Calu3 (cell line): ENCODE measurements at regions of chr3 and their contacts with region 1.

Region 1: DNA sequence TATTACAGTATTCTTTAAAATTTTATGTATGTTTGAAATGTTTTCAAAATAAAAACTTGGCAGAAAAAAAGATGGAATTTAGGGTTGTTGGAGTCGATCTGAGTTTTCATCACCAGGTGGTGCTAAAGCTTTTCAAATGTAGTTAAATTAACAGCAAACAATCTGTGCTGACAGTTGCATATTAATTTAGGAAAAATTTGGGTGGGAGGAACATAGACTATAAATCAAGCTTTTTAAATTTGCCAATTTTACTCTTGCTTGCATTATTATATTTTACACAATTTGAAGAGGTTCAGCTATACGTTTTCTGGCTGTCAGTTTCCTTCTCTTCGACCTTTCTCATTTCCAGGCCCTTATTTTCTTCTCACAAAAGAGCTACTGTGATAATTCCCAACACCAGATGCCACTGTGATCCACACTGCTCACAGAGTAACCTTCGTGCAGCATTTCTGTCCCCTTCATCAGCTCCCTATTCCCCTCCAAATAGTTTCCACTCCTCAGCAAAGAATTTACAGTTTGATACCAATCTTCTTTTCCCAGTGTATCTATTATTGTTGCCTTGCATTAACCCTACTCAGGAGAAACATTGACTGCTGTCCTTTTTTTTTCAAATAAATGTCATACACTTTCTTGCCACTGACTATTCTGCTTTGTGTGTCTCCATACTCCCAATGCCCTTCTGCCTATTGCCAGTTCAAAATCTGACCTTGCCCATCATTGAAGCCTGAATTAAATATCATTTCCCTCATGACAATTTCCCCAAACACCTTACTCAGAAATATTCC is 53.4 kb upstream of the EIF5A2 start:
- DNase-seq: peak; percentile 50
- H3K4me3 Mint-ChIP-seq: no peak overlapping the region
- H3K27ac Mint-ChIP-seq: peak overlapping the region; percentile 8
- H3K4me1 Mint-ChIP-seq: peaks cover 27% of the 10 kb centered on the region
- H3K27me3 Mint-ChIP-seq: no peaks in the 10 kb centered on the region
- CTCF ChIP-seq: peak; percentile 84

Region 2: DNA sequence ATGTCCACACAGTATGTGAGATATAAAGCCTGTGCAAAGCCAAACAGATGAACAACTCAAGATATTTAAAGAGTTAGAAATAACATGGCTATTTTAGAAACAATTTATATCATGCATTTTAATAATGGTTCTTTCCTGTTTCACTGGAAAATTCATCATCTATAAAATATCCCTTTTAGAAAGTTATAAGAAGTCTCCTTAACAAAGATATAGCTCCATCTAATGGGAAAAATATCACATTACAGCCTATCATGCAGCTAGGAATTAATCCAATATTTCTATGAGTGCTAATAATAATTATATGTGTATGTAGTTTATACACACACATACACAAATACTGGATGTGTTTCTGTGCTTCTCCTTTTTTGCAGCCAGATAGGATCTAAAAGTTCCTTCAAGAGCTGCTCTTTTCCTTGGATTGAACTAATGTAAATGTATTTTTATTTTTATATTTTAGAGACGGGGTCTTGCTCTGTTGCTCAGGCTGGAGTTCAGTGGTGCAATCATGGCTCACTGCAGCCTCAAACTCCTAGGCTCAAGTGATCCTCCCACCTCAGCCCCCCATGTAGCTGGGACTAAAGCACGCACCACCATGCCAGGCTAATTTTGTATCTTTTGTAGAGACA is 113.4 kb before region 1 on chr3:
- CTCF ChIA-PET with region 1: no interaction called
- intact Hi-C with region 1: no loop called
- DNase-seq: no peak
- H3K4me3 Mint-ChIP-seq: no peak overlapping the region
- H3K27ac Mint-ChIP-seq: no peak overlapping the region
- H3K4me1 Mint-ChIP-seq: no peaks in the 10 kb centered on the region
- H3K27me3 Mint-ChIP-seq: no peaks in the 10 kb centered on the region
- CTCF ChIP-seq: peak; percentile 53

Region 3: GRCh38 chr3:171001957-171002694 is 40.3 kb after region 1 on chr3:
- CTCF ChIA-PET with region 1: interaction called, 3 read pairs
- intact Hi-C with region 1: loop called (anchors 5 kb)
- DNase-seq: peak; percentile 81
- H3K4me3 Mint-ChIP-seq: peak overlapping the region; percentile 26
- H3K27ac Mint-ChIP-seq: peak overlapping the region; percentile 85
- H3K4me1 Mint-ChIP-seq: peaks cover 86% of the 10 kb centered on the region
- H3K27me3 Mint-ChIP-seq: no peaks in the 10 kb centered on the region
- CTCF ChIP-seq: no peak

Region 4: GRCh38 chr3:171168086-171168485 is 206.3 kb after region 1 on chr3:
- CTCF ChIA-PET with region 1: interaction called, 23 read pairs
- intact Hi-C with region 1: loop called (anchors 1 kb)
- DNase-seq: peak; percentile 76
- H3K4me3 Mint-ChIP-seq: no peak overlapping the region
- H3K27ac Mint-ChIP-seq: peak overlapping the region; percentile 34
- H3K4me1 Mint-ChIP-seq: peaks cover 59% of the 10 kb centered on the region
- H3K27me3 Mint-ChIP-seq: no peaks in the 10 kb centered on the region
- CTCF ChIP-seq: peak; percentile 79

Region 5: GRCh38 chr3:171284308-171285075 is 322.7 kb after region 1 on chr3:
- CTCF ChIA-PET with region 1: no interaction called
- intact Hi-C with region 1: no loop called
- DNase-seq: peak; percentile 37
- H3K4me3 Mint-ChIP-seq: no peak overlapping the region
- H3K27ac Mint-ChIP-seq: peak overlapping the region; percentile 26
- H3K4me1 Mint-ChIP-seq: peaks cover 19% of the 10 kb centered on the region
- H3K27me3 Mint-ChIP-seq: no peaks in the 10 kb centered on the region
- CTCF ChIP-seq: no peak

Region 6: GRCh38 chr3:171365489-171365888 is 403.7 kb after region 1 on chr3:
- CTCF ChIA-PET with region 1: no interaction called
- intact Hi-C with region 1: no loop called
- DNase-seq: no peak
- H3K4me3 Mint-ChIP-seq: no peak overlapping the region
- H3K27ac Mint-ChIP-seq: no peak overlapping the region
- H3K4me1 Mint-ChIP-seq: peaks cover 18% of the 10 kb centered on the region
- H3K27me3 Mint-ChIP-seq: no peaks in the 10 kb centered on the region
- CTCF ChIP-seq: no peak

Region 7: DNA sequence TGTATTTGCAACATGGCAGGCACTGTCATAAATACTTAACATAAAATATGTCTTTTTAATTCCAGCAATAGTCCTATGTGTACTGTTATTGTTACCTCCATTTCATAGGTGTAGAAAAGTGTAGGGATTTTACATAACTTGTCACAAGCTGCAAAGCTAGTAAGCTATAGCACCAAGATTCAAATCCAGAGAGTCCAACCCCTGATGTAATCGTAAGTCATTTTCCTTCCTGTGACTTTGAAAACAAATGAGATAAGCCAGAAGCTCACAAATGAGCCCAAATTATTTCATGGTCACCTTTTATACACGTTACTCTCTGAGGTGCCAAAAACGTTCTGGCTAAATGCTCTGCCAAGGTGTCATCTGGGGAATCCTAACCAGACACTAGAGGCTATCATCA is 474.6 kb after region 1 on chr3:
- CTCF ChIA-PET with region 1: no interaction called
- intact Hi-C with region 1: no loop called
- DNase-seq: no peak
- H3K4me3 Mint-ChIP-seq: no peak overlapping the region
- H3K27ac Mint-ChIP-seq: no peak overlapping the region
- H3K4me1 Mint-ChIP-seq: no peaks in the 10 kb centered on the region
- H3K27me3 Mint-ChIP-seq: no peaks in the 10 kb centered on the region
- CTCF ChIP-seq: no peak

Region 8: DNA sequence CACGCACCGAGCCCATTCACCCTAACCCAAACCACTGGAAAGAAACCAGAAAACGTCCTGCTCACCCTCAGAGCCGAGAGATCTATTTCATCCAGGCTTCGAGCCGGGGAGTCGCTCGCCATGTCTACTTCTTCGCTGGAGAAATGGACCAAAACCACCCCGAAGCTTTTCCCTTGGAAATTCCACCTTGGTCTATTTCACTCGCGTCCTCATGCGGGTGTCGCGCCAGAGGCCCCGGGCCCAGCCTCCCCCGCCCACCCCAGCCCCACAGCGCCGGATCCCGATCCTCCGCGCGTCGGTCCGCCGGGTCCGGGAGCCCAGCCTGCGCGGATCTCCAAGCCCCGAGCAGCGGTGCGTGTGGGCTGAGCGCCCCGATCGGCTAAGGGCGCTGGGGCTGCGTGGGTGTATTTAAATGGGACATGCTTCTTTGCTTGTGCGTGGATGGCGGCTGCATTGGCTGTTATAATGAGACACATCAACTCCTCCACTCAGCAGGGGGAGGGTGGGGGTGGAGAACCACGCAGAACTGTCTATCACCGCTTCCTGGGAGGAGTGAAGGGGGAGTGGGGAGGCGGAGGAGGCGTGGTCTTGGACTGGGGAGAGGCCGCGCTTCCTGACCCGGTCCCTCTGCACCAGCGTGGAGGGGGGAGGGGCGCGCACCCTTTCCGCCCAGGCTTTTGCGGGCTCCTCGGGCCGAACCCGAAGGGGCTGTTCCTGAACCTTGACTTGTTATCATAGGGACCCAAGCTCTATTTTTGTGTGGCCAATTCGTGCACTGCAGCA is 498.3 kb after region 1 on chr3 and contains the start of gene TNIK:
- CTCF ChIA-PET with region 1: interaction called, 4 read pairs
- intact Hi-C with region 1: loop called (anchors 5 kb)
- DNase-seq: peak; percentile 96
- H3K4me3 Mint-ChIP-seq: peak within 1 kb of the TSS; percentile 97
- H3K27ac Mint-ChIP-seq: peak within 1 kb of the TSS; percentile 85
- H3K4me1 Mint-ChIP-seq: peaks cover 45% of the 10 kb centered on the region
- H3K27me3 Mint-ChIP-seq: no peaks in the 10 kb centered on the region
- CTCF ChIP-seq: peak; percentile 61
- total RNA-seq, gene TNIK: 17.6 and 19.7 TPM in 2 replicates

Region 9: DNA sequence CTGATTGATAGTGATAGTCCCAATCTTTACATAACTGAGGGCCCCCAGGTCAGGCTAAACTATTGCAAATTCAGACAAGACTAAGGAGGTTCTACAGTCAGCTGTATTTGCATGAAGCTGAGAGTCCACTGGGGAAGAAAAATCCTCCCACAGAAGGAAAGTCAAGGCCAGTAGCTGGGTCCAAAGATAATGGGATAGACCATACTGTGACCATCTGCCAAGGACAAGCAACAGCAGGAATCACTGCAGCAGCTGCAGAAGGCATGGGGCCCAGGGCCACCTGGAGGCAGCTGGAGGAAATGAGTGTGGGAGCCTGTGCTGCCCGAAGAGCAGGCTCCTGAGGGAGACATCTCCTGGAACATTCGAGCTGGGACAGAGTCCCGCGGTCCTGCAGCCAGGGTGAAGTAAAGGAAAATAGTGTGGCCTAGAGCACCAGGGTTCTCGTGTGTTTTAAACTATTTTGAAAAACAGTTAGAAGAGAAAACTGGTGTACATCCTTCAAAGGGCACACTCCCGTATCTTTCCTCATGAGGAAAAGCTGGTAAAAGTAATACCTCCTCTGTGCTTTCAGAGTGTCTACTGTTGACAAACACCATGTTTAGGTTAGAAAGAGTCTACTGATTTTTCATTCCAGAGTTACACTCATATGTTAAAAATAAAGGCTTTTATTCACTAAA is 868.2 kb after region 1 on chr3:
- CTCF ChIA-PET with region 1: no interaction called
- intact Hi-C with region 1: loop called (anchors 10 kb)
- DNase-seq: peak; percentile 86
- H3K4me3 Mint-ChIP-seq: no peak overlapping the region
- H3K27ac Mint-ChIP-seq: no peak overlapping the region
- H3K4me1 Mint-ChIP-seq: peaks cover 44% of the 10 kb centered on the region
- H3K27me3 Mint-ChIP-seq: no peaks in the 10 kb centered on the region
- CTCF ChIP-seq: peak; percentile 93